ENCODE measurements at regions of chr10 and their contacts with region 1.

Region 1: GRCh38 chr10:87761892-87762291 is 56.1 kb downstream of the ATAD1 start:
- DNase-seq: no peak
- ATAC-seq: peak; percentile 88
- H3K4me3 ChIP-seq: no peak overlapping the region
- H3K27ac ChIP-seq: no peak overlapping the region
- H3K4me1 ChIP-seq: no peaks in the 10 kb centered on the region
- H3K27me3 ChIP-seq: no peaks in the 10 kb centered on the region
- CTCF ChIP-seq: no peak
- EP300 ChIP-seq: no peak
- POLR2A ChIP-seq: no peak
- RAD21 ChIP-seq: no peak

Region 2: GRCh38 chr10:87700031-87700796 is 61.7 kb before region 1 on chr10:
- CTCF ChIA-PET with region 1: no interaction called
- POLR2A ChIA-PET with region 1: no interaction called
- RAD21 ChIA-PET with region 1: no interaction called
- SMC1A ChIA-PET with region 1: no interaction called
- in situ Hi-C with region 1: no loop called
- intact Hi-C with region 1: no loop called
- DNase-seq: no peak
- ATAC-seq: no peak
- H3K4me3 ChIP-seq: no peak overlapping the region
- H3K27ac ChIP-seq: no peak overlapping the region
- H3K4me1 ChIP-seq: no peaks in the 10 kb centered on the region
- H3K27me3 ChIP-seq: no peaks in the 10 kb centered on the region; a peak in 1 of 4 replicates
- CTCF ChIP-seq: no peak
- EP300 ChIP-seq: no peak
- POLR2A ChIP-seq: no peak
- RAD21 ChIP-seq: no peak

Region 3: DNA sequence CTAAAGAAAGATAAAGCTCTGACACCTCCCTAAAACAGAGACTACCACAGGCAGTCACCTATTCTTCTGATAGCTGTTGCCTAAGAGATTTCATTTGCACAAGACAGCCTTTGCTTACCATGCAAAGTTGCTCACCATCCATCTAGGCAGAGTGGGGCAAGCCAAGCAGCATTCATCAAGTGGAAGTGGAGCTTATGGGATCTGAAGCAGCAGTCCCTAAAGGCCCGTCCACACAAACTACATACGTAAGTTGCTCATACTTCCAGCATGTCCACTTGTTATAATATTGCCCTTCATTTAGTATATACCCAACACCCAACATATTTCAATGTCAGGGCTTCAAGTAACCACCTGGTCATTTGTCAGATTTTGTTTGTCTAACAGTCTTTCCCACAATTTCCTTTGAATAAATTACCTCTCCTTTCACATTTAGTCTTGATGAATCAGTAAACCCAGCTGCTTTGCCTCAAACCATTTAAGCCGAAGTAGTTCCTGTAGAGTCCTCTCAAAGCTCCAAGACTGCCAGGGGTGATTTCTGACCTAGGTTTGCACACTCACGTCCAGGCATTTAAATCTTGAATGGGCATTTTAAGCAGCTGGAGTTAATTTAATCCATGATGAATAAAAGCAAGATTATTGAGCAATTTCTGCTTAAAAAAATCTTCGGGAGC is 11.8 kb before region 1 on chr10:
- CTCF ChIA-PET with region 1: interaction called, 3 read pairs
- POLR2A ChIA-PET with region 1: interaction called, 3 read pairs
- RAD21 ChIA-PET with region 1: no interaction called
- SMC1A ChIA-PET with region 1: interaction called, 10 read pairs
- in situ Hi-C with region 1: no loop called
- intact Hi-C with region 1: no loop called
- DNase-seq: no peak
- ATAC-seq: peak; percentile 22; the same call in 2 of the 3 replicates
- H3K4me3 ChIP-seq: no peak overlapping the region
- H3K27ac ChIP-seq: no peak overlapping the region
- H3K4me1 ChIP-seq: peaks cover 9% of the 10 kb centered on the region; the same call in 1 of the 2 replicates
- H3K27me3 ChIP-seq: no peaks in the 10 kb centered on the region
- CTCF ChIP-seq: no peak
- EP300 ChIP-seq: no peak
- POLR2A ChIP-seq: peak; percentile 44; the same call in 1 of the 2 replicates
- RAD21 ChIP-seq: no peak